Posterior cingulate gyrus (tissue), 11 donors: ENCODE measurements at regions of chr3 and their contacts with region 1.

Region 1: GRCh38 chr3:173395412-173396181 is 1.9 kb upstream of the NLGN1 start:
- DNase-seq: peak; percentile 83 to 98 (median 88)

Region 2: DNA sequence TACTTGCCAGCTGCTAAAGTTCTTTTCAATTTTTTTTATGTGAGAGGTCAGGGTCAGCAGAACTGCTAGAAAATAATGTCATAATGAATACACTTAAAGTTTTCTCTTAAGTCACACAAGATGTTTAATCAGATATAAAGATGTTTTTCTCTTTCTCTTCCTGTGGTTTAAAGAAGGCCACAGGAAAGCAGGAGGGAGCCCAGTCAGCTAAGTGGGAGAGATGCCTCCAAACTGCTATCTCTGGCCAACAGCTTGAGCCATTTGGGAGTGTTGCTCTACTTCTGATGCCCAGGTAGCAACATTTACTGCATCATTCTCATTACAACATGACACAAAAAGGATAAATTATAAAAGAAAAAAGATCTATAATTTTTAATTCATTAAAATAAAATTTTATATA is 43.7 kb before region 1 on chr3:
- intact Hi-C with region 1: no loop called
- DNase-seq: no peak

Region 3: GRCh38 chr3:173599673-173600072 is 204.1 kb after region 1 on chr3:
- intact Hi-C with region 1: no loop called
- DNase-seq: no peak

Region 4: DNA sequence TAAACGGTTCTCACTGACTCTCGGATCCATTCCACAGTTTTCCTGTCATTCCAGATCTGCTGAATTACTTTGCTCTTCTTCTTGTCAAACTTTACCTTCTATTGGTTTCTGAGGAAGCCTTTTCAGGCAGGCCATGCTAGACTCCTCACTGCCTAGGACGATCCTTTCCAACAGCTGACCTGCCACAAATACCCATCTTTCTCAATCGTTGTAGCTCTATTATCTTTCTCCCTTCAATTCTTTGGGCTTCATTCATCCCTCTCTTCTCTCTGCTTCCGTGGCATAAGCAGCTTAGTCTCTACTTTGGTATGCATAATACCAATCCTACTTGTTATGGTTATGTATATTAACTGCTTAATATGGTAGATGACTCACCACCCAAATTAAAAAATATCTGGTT is 423.8 kb after region 1 on chr3:
- intact Hi-C with region 1: no loop called
- DNase-seq: no peak

Region 5: GRCh38 chr3:174440741-174441587 is 1045.4 kb after region 1 on chr3:
- intact Hi-C with region 1: loop called (anchors 5 kb)
- DNase-seq: peak; percentile 73 to 97 (median 78)